ENCODE measurements at regions of chr20 and their contacts with region 1.

Region 1: GRCh38 chr20:34538671-34539123 is 19.8 kb upstream of the MAP1LC3A start:
- DNase-seq: no peak
- H3K4me3 ChIP-seq: no peak overlapping the region
- H3K27me3 ChIP-seq: no peaks in the 10 kb centered on the region
- CTCF ChIP-seq: peak; percentile 89

Region 2: GRCh38 chr20:34522969-34523871 is 15.5 kb before region 1 on chr20:
- CTCF ChIA-PET with region 1: interaction called, 23 read pairs
- POLR2A ChIA-PET with region 1: no interaction called
- DNase-seq: no peak
- H3K4me3 ChIP-seq: no peak overlapping the region
- H3K27me3 ChIP-seq: no peaks in the 10 kb centered on the region
- CTCF ChIP-seq: peak; percentile 63

Region 3: GRCh38 chr20:34558320-34559218 is 19.9 kb after region 1 on chr20 and contains the start of gene MAP1LC3A:
- CTCF ChIA-PET with region 1: interaction called, 15 read pairs
- POLR2A ChIA-PET with region 1: no interaction called
- DNase-seq: peak; percentile 57
- H3K4me3 ChIP-seq: peak within 1 kb of the TSS; percentile 88
- H3K27me3 ChIP-seq: no peaks in the 10 kb centered on the region
- CTCF ChIP-seq: no peak
- polyA plus RNA-seq, gene MAP1LC3A: 28.7 and 33.7 TPM in 2 replicates